Activated naive CD4-positive, alpha-beta T cell treated with anti-CD3 and anti-CD28 coated beads for 36 hours (primary cell): ENCODE measurements at regions of chr22 and their contacts with region 1.

Region 1: GRCh38 chr22:36065775-36066559 is 37.3 kb upstream of the RBFOX2 start:
- DNase-seq: peak; percentile 80
- H3K4me3 Mint-ChIP-seq: peak overlapping the region; percentile 81
- H3K27ac Mint-ChIP-seq: peak overlapping the region; percentile 65
- H3K4me1 Mint-ChIP-seq: peaks cover 9% of the 10 kb centered on the region
- H3K27me3 Mint-ChIP-seq: no peaks in the 10 kb centered on the region

Region 2: GRCh38 chr22:35627264-35628041 is 438.5 kb before region 1 on chr22:
- CTCF ChIA-PET with region 1: interaction called, 14 read pairs
- intact Hi-C with region 1: loop called (anchors 1 kb)
- DNase-seq: peak; percentile 85
- H3K4me3 Mint-ChIP-seq: peak overlapping the region; percentile 67
- H3K27ac Mint-ChIP-seq: no peak overlapping the region
- H3K4me1 Mint-ChIP-seq: peaks cover 16% of the 10 kb centered on the region
- H3K27me3 Mint-ChIP-seq: no peaks in the 10 kb centered on the region

Region 3: GRCh38 chr22:35947794-35948425 is 118.1 kb before region 1 on chr22:
- CTCF ChIA-PET with region 1: interaction called, 11 read pairs
- intact Hi-C with region 1: no loop called
- DNase-seq: no peak
- H3K4me3 Mint-ChIP-seq: no peak overlapping the region
- H3K27ac Mint-ChIP-seq: no peak overlapping the region
- H3K4me1 Mint-ChIP-seq: no peaks in the 10 kb centered on the region
- H3K27me3 Mint-ChIP-seq: peaks cover 3% of the 10 kb centered on the region

Region 4: DNA sequence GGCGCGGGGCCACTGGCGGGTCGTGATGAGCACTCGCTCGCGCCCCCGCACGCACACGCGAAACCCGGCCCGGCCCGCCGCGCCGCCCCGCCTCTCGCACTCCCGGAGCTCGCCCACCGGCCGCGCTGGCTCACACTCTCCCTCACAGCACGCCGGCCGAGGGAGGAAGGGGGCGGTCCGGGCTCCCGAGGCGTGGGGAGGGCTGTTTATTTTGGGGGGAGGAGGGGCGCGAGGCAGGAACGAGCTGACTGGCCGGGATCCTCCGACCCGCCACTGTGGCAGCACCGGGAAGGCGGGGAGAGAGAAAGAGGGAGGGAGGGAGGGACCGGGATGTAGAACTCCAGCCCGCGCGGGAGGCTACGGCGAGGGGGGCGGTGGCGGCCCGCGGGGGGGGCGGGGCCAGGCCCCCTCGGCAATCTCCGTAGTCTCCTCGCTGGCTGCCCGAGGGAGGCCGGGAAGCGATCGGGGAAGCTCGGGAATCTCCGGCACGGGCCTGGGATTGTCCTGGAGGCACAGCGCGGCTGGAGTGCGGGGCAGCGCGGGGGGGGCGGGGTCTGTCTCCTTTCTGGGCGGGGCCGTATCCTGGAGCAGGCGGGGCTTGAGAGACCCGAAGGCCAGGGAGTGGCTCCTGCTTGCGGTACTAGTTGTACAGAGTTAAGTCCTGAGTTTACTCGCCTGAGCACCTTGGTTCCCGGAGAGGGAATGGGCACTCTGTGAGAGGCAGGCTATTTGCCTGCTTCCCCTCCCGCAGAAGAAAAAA is 37.1 kb before region 1 on chr22 and contains the start of gene RBFOX2:
- CTCF ChIA-PET with region 1: interaction called, 31 read pairs
- intact Hi-C with region 1: loop called (anchors 2 kb)
- DNase-seq: peak; percentile 81
- H3K4me3 Mint-ChIP-seq: peak within 1 kb of the TSS; percentile 88
- H3K27ac Mint-ChIP-seq: no peak within 1 kb of the TSS
- H3K4me1 Mint-ChIP-seq: peaks cover 13% of the 10 kb centered on the region
- H3K27me3 Mint-ChIP-seq: peaks cover 3% of the 10 kb centered on the region
- total RNA-seq, gene RBFOX2: 3.3 to 4.3 TPM

Region 5: DNA sequence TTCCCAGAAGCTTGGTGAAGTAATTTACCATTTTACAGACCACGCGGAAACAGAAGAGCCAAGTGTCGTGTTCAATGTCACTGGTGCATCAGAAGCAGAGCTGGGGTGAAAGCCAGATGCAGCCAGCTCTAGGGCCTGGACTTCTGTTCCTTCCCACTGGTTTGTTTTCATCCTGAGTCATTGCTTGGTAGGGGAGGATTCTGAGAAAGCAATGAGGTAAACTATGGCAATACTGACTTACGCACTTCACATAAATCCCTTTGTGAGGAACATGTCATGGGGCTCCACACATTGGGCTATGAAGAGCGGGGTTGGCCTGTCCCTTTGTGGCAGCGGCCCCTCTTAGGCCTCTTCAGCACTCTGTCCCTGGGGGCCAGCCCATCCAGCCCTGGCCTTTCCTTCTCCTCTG is 15.1 kb after region 1 on chr22:
- CTCF ChIA-PET with region 1: interaction called, 27 read pairs
- intact Hi-C with region 1: no loop called
- DNase-seq: no peak
- H3K4me3 Mint-ChIP-seq: no peak overlapping the region
- H3K27ac Mint-ChIP-seq: no peak overlapping the region
- H3K4me1 Mint-ChIP-seq: no peaks in the 10 kb centered on the region
- H3K27me3 Mint-ChIP-seq: no peaks in the 10 kb centered on the region

Region 6: GRCh38 chr22:36116127-36116526 is 50.2 kb after region 1 on chr22:
- CTCF ChIA-PET with region 1: interaction called, 15 read pairs
- intact Hi-C with region 1: no loop called
- DNase-seq: no peak
- H3K4me3 Mint-ChIP-seq: no peak overlapping the region
- H3K27ac Mint-ChIP-seq: no peak overlapping the region
- H3K4me1 Mint-ChIP-seq: no peaks in the 10 kb centered on the region
- H3K27me3 Mint-ChIP-seq: no peaks in the 10 kb centered on the region

Region 7: DNA sequence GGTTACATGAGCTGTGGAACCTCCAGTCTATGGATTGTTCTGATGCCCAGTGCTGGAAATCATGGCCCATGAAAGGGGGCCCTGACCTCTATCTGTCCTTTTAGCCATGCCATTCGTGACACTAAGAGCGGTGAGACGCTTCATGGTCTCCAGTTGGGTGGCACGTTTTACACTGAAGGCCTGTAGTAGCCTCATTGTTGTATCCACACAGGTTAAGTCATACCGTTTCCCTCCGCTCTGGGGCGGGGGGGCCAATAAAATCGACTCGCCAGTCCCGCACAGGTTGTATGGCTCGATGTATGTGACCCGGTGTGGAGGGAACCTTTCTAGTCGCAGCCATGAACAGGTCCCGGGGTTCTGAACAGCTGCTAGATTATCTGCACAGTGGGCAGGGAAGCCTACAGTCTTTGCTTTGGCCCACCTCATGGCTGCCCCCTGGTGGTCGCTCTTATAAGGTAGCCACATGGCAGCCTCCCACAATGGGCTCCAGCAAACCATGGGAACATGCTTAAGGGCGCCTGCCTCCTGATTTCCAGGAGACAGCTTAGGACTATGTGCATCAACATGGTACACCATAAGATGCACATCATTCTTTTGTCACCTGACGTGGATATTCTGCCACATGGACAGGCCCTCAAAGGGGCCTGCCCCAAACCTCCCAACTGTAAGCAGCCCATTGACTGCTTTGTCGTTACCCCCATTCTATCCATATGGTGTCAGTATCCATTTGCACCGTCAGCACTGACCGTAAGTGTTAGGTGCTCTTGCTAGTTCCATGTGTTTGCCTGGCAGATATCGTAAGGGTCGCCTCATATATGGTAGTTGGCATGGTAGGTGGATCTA is 114.3 kb after region 1 on chr22:
- CTCF ChIA-PET with region 1: interaction called, 14 read pairs
- intact Hi-C with region 1: loop called (anchors 1 kb)
- DNase-seq: peak; percentile 93
- H3K4me3 Mint-ChIP-seq: no peak overlapping the region
- H3K27ac Mint-ChIP-seq: no peak overlapping the region
- H3K4me1 Mint-ChIP-seq: peaks cover 7% of the 10 kb centered on the region
- H3K27me3 Mint-ChIP-seq: no peaks in the 10 kb centered on the region

Region 8: DNA sequence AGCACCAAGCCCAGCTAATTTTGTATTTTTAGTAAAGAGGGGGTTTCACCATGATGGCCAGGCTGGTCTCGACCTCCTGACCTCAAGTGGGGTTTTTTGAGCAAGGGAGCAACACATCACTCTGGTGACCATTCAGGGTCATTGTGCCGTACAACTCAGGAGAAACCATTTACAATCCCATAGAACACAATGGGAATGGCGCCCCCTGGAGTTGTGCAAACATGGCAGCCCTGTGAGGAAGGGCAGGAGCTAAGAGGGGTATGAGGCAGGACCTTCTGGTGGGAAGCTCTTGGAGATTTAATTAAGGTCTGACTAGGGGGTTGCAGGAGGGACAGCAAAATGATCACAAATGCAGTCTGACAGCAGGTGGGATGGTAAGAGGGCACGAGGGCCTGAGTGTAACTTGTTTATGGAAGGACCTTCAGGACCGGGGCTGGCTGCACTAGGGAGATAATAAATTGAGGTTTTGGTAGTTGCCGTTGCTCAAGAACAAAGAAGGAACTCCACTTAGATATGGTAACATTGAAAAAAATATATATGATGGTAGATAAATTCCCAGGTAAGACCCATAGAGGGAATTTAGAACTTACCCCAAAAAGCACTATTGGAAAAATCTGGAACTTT is 838.4 kb after region 1 on chr22:
- CTCF ChIA-PET with region 1: no interaction called
- intact Hi-C with region 1: no loop called
- DNase-seq: no peak
- H3K4me3 Mint-ChIP-seq: no peak overlapping the region
- H3K27ac Mint-ChIP-seq: no peak overlapping the region
- H3K4me1 Mint-ChIP-seq: no peaks in the 10 kb centered on the region
- H3K27me3 Mint-ChIP-seq: peaks cover 34% of the 10 kb centered on the region